Activated CD4-positive, alpha-beta T cell treated with anti-CD3 and anti-CD28 coated beads, Interleukin-2, amount 10 ng/mL, durations not matched to agents 24 days and 14 days (primary cell): ENCODE measurements at regions of chr3 and their contacts with region 1.

Region 1: DNA sequence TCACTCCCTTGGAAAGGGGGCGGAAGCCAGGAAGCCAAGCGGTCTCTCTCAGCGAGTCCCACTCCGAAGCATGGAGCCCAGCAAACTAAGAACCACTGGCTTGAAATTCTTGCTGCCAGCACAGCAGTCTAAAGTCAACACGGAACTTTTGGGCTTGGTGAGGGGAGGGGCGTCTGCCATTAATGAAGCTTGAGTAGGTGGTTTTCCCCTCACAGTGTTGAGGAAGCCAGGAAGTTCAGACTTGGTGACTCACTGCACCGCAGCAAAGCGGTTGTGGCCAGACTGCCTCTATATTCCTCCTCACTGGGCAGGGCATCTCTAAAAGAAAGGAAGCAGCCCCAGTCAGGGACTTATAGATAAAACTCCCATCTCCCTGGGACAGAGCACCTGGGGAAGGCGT is 665.4 kb upstream of the CBLB start:
- DNase-seq: peak; percentile 81
- H3K4me3 Mint-ChIP-seq: no peak overlapping the region
- H3K27ac Mint-ChIP-seq: peak overlapping the region; percentile 81
- H3K4me1 Mint-ChIP-seq: peaks cover 17% of the 10 kb centered on the region
- H3K27me3 Mint-ChIP-seq: no peaks in the 10 kb centered on the region

Region 2: GRCh38 chr3:106381939-106382335 is 152.3 kb before region 1 on chr3:
- intact Hi-C with region 1: no loop called
- DNase-seq: no peak
- H3K4me3 Mint-ChIP-seq: no peak overlapping the region
- H3K27ac Mint-ChIP-seq: no peak overlapping the region
- H3K4me1 Mint-ChIP-seq: no peaks in the 10 kb centered on the region
- H3K27me3 Mint-ChIP-seq: no peaks in the 10 kb centered on the region

Region 3: GRCh38 chr3:106473576-106474475 is 60.4 kb before region 1 on chr3:
- intact Hi-C with region 1: loop called (anchors 1 kb)
- DNase-seq: no peak
- H3K4me3 Mint-ChIP-seq: no peak overlapping the region
- H3K27ac Mint-ChIP-seq: peak overlapping the region; percentile 83
- H3K4me1 Mint-ChIP-seq: peaks cover 8% of the 10 kb centered on the region
- H3K27me3 Mint-ChIP-seq: no peaks in the 10 kb centered on the region

Region 4: DNA sequence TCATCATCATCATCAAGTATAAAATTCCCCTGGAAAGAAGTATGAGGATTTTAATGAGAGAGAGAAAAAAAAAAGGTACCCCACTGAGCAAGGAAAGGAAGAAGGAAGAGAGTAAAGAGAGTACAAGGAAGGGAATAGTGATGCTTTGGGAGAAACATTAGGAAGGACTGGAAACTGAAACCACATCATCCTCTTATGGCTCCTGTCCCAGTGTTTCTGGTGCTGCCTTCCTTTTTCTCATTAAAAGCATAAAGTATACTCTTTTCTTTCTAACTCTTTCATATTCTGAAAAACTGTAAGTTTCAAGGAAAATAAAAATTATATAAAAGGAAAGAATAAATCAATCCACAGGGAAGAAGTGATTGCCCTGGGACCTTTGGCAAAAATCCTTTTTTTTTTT is 49.0 kb before region 1 on chr3:
- intact Hi-C with region 1: loop called (anchors 5 kb)
- DNase-seq: no peak
- H3K4me3 Mint-ChIP-seq: no peak overlapping the region
- H3K27ac Mint-ChIP-seq: no peak overlapping the region
- H3K4me1 Mint-ChIP-seq: peaks cover 2% of the 10 kb centered on the region
- H3K27me3 Mint-ChIP-seq: no peaks in the 10 kb centered on the region